ENCODE measurements at regions of chr7 and their contacts with region 1.

Region 1: DNA sequence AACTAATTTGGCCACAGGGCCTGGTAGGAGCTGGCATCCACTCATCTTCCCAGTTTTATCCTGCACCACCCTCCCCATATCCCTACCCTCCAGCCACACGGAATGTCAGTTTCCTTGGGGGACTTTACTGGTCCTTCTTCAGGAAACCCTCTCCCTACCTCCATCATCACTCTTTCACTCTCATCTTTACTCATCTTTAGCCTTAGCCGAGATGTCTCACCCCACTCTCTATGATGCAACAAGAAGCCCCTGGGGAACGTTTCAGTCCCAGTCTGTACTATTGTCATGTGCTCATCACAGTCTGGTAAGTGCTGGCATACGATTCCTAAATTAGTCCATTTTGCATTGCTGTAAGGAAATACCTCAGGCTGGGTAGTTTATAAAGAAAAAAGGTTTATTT is 34.9 kb upstream of the TMEM248 start:
- DNase-seq: peak; percentile 35
- H3K4me3 Mint-ChIP-seq: no peak overlapping the region
- H3K27ac Mint-ChIP-seq: no peak overlapping the region
- H3K4me1 Mint-ChIP-seq: peaks cover 31% of the 10 kb centered on the region
- H3K27me3 Mint-ChIP-seq: no peaks in the 10 kb centered on the region

Region 2: DNA sequence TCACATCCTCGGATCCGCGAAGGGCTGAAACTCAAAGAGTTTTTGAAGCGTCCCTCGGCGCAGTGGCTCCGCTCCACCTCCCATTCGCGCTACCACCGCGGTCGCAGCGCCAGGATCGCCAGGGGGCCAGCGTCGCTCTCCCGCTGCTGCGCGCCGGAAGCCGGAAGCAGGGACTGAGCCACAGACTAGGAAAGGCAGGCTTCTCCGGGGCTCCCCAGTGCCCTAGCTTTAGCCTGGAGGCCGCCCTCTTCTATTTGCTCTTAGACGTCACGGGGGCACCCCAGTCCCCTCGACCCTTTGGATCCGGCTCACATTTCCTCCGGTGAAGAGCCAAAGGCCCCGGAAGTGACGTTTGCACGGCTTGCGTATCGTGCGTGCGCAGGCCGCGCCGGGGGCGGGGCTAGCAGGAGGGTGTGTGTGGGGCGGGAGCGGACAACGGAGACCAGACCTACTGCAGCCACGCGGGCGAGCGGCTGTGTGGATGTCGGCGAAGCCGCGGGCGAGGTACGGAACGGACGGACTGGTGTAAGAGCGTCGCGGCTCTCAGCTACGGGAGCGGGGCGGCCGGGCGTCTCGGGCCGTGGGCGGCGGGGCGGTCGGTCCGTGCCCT is 231.9 kb before region 1 on chr7:
- CTCF ChIA-PET with region 1: no interaction called
- POLR2A ChIA-PET with region 1: no interaction called
- intact Hi-C with region 1: no loop called
- DNase-seq: peak; percentile 98
- H3K4me3 Mint-ChIP-seq: peak overlapping the region; percentile 94
- H3K27ac Mint-ChIP-seq: peak overlapping the region; percentile 96
- H3K4me1 Mint-ChIP-seq: peaks cover 23% of the 10 kb centered on the region
- H3K27me3 Mint-ChIP-seq: no peaks in the 10 kb centered on the region

Region 3: DNA sequence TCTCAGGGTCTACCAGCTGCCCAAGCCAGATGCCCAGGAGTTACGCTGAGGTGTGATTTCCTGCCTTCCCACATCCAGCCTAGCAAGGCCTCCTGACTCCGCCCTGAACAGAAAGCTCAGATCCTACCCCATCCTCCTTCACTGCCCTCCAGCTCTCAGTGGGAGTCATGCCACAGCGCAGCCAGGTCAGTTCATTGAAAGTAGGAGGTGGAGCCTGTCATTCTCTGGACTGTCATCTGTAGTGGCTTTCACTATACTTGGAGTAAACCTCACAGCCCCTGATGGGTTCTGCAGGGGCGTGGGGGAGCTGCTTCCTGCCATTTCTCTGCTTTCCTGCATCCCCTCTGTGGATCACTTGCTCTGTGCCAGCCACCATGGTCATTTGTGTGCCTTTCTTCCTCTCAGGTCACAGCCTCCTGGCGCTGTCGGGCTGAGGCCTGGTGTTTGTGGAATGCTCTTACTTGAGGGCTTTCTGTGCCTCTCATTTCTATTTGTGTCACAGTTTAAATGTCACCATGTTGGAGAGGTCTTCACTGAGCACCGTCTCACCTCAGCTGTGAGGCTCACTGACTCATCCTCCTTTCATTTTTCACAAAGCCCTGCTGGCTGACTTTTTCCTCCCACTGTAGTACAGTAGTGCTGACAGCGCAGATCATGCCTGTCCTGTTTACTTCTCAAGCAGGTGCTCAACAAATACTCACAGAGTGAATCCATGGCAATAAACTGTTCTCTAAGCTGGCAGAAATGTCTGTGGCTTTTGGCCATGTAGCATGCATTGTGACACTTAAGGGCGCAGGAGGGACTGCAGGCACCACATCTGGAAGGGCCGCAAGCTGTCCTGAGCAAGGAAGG is 26.1 kb before region 1 on chr7:
- CTCF ChIA-PET with region 1: no interaction called
- POLR2A ChIA-PET with region 1: no interaction called
- intact Hi-C with region 1: loop called (anchors 1 kb)
- DNase-seq: peak; percentile 79
- H3K4me3 Mint-ChIP-seq: peak overlapping the region; percentile 53
- H3K27ac Mint-ChIP-seq: peak overlapping the region; percentile 93
- H3K4me1 Mint-ChIP-seq: peaks cover 23% of the 10 kb centered on the region
- H3K27me3 Mint-ChIP-seq: no peaks in the 10 kb centered on the region

Region 4: GRCh38 chr7:66869660-66870450 is 16.3 kb before region 1 on chr7:
- CTCF ChIA-PET with region 1: no interaction called
- POLR2A ChIA-PET with region 1: no interaction called
- intact Hi-C with region 1: loop called (anchors 1 kb)
- DNase-seq: peak; percentile 37
- H3K4me3 Mint-ChIP-seq: no peak overlapping the region
- H3K27ac Mint-ChIP-seq: no peak overlapping the region
- H3K4me1 Mint-ChIP-seq: peaks cover 14% of the 10 kb centered on the region
- H3K27me3 Mint-ChIP-seq: no peaks in the 10 kb centered on the region

Measured in activated CD4-positive, alpha-beta memory T cell treated with anti-CD3 and anti-CD28 coated beads for 36 hours (primary cell).